MCF 10A (cell line): ENCODE measurements at regions of chr12 and their contacts with region 1.

Region 1: GRCh38 chr12:122003651-122004611 is 17.8 kb upstream of the BCL7A start:
- DNase-seq: no peak
- H3K4me3 Mint-ChIP-seq: no peak overlapping the region
- H3K27ac Mint-ChIP-seq: no peak overlapping the region
- H3K4me1 Mint-ChIP-seq: peaks cover 6% of the 10 kb centered on the region
- H3K27me3 Mint-ChIP-seq: no peaks in the 10 kb centered on the region
- CTCF ChIP-seq: no peak

Region 2: GRCh38 chr12:121968876-121969275 is 35.1 kb before region 1 on chr12:
- CTCF ChIA-PET with region 1: no interaction called
- POLR2A ChIA-PET with region 1: no interaction called
- intact Hi-C with region 1: loop called (anchors 2 kb)
- DNase-seq: no peak
- H3K4me3 Mint-ChIP-seq: no peak overlapping the region
- H3K27ac Mint-ChIP-seq: no peak overlapping the region
- H3K4me1 Mint-ChIP-seq: no peaks in the 10 kb centered on the region
- H3K27me3 Mint-ChIP-seq: no peaks in the 10 kb centered on the region
- CTCF ChIP-seq: no peak

Region 3: DNA sequence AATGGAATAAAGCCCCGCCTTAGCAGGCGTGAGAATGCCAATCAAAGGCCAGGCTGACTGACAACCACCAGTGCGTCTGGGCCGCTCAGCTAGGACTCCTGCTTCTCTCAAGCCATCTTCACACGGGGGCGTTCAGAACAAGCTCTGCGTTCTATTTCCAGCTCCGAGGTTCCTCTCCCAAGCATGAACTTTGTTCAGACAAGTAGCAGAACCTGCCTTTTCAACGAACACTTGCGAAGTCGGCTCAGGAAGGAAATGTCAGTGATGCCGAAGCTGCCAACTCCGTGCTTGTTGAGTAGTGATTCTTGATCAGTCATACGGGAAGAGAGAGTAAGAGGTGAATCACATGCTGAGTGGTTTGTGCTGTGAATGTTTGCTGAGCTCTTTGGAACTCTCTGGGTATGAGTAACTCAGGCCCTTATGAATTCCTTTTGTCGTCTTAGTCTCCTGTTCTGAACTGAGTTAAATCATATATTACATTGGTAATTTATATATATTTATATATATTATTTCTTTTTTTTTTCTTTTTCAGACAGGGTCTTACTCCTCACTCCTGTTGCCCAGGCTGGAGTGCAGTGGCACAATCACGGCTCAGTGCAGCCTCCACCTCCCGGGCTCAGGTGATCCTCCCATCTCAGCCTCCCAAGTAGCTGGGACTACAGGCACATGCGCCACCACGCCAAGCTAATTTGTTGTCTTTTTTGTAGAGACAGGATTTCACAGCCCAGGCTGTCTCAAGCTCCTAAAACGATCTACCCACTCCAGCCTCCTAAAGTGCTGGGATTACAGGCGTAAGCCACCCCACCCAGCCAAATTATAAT is 11.7 kb before region 1 on chr12:
- CTCF ChIA-PET with region 1: interaction called, 3 read pairs
- POLR2A ChIA-PET with region 1: interaction called, 21 read pairs
- intact Hi-C with region 1: no loop called
- DNase-seq: peak; percentile 93
- H3K4me3 Mint-ChIP-seq: peak overlapping the region; percentile 61
- H3K27ac Mint-ChIP-seq: peak overlapping the region; percentile 90
- H3K4me1 Mint-ChIP-seq: peaks cover 9% of the 10 kb centered on the region
- H3K27me3 Mint-ChIP-seq: no peaks in the 10 kb centered on the region
- CTCF ChIP-seq: no peak

Region 4: DNA sequence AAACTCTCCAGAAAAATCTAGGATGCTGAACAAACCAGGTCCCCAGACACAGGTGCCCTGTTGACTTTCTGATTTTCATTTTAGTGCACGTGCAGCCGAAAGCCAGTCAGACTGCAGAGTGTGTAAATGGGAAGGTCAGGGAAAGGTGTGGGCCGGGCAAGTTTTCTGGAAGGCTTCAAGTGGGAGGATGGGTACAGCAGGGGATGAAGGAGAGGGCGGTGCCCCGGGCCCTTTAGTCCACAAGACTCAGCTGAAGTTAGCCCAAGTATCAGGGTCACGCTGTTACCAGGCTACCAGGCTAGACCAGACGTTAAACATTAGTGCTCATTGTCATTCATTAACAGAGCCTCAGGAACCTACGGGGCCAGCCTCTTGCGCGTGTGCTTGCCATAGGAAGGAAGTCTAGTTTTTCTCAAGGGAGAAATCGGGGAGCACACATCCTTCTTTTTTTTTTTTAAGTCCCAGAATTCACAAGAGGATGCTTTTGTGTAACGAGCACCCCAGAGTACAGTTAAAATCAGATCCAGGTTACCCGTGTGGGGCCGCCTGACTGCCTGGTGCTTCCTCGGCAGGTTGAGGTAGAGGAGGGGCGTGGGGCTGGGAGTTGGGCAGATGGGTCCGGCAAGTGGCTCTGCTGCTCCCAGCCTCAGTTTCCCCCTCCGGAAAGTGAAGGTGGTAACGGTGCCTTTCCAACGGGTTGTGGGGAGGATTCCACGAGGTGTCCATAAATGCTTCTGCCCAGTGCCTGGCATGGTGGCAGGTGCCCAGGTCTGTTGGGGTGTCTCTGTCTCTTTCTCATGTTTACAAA is 36.9 kb after region 1 on chr12:
- CTCF ChIA-PET with region 1: no interaction called
- POLR2A ChIA-PET with region 1: no interaction called
- intact Hi-C with region 1: no loop called
- DNase-seq: no peak
- H3K4me3 Mint-ChIP-seq: no peak overlapping the region
- H3K27ac Mint-ChIP-seq: no peak overlapping the region
- H3K4me1 Mint-ChIP-seq: peaks cover 4% of the 10 kb centered on the region
- H3K27me3 Mint-ChIP-seq: no peaks in the 10 kb centered on the region
- CTCF ChIP-seq: no peak